ENCODE measurements at regions of chr18 and their contacts with region 1.

Region 1: GRCh38 chr18:62584241-62585120 is 61.7 kb downstream of the ZCCHC2 start:
- DNase-seq: peak; percentile 88
- CTCF ChIP-seq: peak; percentile 96

Region 2: GRCh38 chr18:61926532-61926931 is 657.9 kb before region 1 on chr18:
- CTCF ChIA-PET with region 1: no interaction called
- POLR2A ChIA-PET with region 1: no interaction called
- DNase-seq: no peak
- CTCF ChIP-seq: no peak

Region 3: GRCh38 chr18:62186774-62187542 is 397.5 kb before region 1 on chr18 and contains the starts of genes PIGN and RELCH:
- CTCF ChIA-PET with region 1: interaction called, 25 read pairs
- POLR2A ChIA-PET with region 1: no interaction called
- DNase-seq: peak; percentile 97
- CTCF ChIP-seq: no peak

Region 4: GRCh38 chr18:62432176-62432818 is 152.2 kb before region 1 on chr18:
- CTCF ChIA-PET with region 1: interaction called, 53 read pairs
- POLR2A ChIA-PET with region 1: no interaction called
- DNase-seq: no peak
- CTCF ChIP-seq: no peak

Region 5: DNA sequence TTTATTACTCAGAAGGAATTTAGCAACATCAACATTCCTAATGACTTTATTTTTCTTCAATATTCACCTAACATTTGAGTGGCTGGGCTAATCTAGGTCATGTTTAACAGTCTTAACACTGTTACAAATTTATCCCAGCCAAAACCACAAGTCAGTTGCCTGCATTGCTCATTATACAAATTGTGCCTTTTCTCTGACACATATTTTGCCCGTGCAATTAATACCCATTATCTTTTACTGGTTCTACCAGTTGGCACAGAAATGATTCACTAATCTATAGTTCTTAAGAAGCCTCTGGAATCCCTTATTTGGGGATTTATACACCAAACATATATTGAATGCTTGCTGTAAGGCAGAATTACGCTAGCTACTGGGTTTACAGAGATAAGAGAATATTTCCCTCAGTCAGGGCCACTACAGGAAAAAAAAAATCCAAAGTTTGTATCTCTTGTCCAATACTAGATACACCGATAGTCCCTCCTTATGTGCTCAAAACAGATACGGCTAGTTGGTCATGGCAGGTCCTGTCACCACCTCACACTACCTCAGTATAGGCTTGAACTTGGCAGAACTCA is 15.3 kb before region 1 on chr18:
- CTCF ChIA-PET with region 1: interaction called, 114 read pairs
- POLR2A ChIA-PET with region 1: no interaction called
- DNase-seq: no peak
- CTCF ChIP-seq: no peak

Region 6: DNA sequence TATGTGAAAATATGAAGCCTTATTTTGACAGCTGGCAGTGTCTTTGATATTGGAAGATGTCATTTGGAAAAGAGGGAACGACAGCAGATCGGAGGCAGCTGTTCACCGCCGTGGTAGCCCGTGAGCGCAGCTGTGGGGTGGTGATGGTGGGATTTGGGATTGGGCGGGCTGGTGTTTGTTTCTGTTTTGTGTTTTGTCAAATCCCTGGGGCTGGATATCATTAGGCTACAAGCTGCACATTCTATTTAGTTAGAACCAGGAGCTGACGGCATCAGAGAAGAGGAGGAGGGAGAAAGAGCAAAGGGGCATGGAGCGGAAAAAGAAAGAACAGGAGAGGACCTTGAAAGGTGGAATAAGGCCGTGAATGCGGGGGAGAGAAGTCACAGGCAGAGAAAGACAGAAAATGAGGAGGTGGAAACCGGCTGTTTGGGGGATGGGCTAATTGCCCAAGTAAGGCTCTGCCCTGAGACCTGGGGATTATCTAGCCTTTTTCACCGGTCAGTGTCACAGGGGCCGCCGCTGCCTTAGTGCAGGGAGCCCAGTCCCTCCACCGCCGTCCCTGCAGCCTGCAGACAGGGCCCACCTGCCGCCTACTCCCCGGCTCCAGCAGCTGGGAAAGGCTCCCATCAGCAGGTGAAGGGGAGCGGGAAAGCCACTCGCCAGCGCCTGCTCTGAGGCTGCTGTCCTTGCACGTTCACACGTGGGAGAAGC is 26.4 kb after region 1 on chr18:
- CTCF ChIA-PET with region 1: interaction called, 23 read pairs
- POLR2A ChIA-PET with region 1: no interaction called
- DNase-seq: no peak
- CTCF ChIP-seq: no peak

Region 7: DNA sequence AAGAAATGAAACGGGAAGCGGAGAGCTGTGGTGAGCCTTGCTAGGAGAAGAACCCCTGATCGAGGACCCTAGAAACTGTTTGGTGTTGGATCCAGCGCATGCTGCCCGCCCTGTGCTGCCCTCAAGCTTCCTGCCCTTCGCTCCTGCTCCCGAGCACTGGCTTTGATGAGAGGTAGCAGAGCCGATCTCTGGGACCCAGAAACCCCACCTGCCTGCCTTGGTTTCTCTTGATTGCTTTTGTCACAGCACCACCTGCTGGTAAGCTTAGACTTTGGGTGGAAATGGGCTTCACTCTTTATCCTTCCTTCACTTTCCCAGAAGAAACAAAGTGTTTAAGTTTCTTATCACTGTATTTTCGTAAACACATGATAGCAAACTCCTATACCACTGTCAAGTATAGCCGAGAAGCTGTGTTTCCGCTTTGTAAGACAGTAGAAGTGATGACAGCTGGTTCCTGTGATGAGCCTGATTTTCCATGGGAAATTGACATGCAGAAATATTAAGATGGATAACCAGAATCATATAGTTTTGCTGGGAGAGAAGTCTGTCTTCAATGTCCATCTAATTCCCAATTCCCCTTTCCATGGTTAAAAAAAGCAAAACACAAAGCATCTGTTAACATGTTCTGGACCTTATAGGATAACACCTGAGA is 398.2 kb after region 1 on chr18:
- CTCF ChIA-PET with region 1: interaction called, 68 read pairs
- POLR2A ChIA-PET with region 1: no interaction called
- DNase-seq: peak; percentile 80
- CTCF ChIP-seq: peak; percentile 77

Measured in GM10248 (cell line).